PC-9 (cell line): ENCODE measurements at regions of chr14 and their contacts with region 1.

Region 1: GRCh38 chr14:92106143-92106926 is at the start of gene ATXN3:
- DNase-seq: peak; percentile 74 to 86
- H3K4me3 ChIP-seq: peak within 1 kb of the TSS; percentile 98
- H3K27ac ChIP-seq: peak within 1 kb of the TSS; percentile 83
- H3K4me1 ChIP-seq: peaks cover 4% of the 10 kb centered on the region
- H3K27me3 ChIP-seq: no peaks in the 10 kb centered on the region
- CTCF ChIP-seq: no peak; the same call in 1 of the 2 replicates
- total RNA-seq, gene ATXN3: 5.9 and 8.5 TPM in 2 replicates

Region 2: GRCh38 chr14:91060351-91061055 is 1045.8 kb before region 1 on chr14 and contains the start of gene RPS6KA5:
- CTCF ChIA-PET with region 1: no interaction called
- POLR2A ChIA-PET with region 1: interaction called, 15 read pairs
- intact Hi-C with region 1: no loop called
- DNase-seq: peak; percentile 88 to 96
- H3K4me3 ChIP-seq: peak within 1 kb of the TSS; percentile 82
- H3K27ac ChIP-seq: peak within 1 kb of the TSS; percentile 67
- H3K4me1 ChIP-seq: peaks cover 22% of the 10 kb centered on the region
- H3K27me3 ChIP-seq: no peaks in the 10 kb centered on the region
- CTCF ChIP-seq: 0 out of 2 replicates have a peak, but pooled peaks have one; percentile 15
- total RNA-seq, gene RPS6KA5: 3.0 and 3.5 TPM in 2 replicates

Region 3: DNA sequence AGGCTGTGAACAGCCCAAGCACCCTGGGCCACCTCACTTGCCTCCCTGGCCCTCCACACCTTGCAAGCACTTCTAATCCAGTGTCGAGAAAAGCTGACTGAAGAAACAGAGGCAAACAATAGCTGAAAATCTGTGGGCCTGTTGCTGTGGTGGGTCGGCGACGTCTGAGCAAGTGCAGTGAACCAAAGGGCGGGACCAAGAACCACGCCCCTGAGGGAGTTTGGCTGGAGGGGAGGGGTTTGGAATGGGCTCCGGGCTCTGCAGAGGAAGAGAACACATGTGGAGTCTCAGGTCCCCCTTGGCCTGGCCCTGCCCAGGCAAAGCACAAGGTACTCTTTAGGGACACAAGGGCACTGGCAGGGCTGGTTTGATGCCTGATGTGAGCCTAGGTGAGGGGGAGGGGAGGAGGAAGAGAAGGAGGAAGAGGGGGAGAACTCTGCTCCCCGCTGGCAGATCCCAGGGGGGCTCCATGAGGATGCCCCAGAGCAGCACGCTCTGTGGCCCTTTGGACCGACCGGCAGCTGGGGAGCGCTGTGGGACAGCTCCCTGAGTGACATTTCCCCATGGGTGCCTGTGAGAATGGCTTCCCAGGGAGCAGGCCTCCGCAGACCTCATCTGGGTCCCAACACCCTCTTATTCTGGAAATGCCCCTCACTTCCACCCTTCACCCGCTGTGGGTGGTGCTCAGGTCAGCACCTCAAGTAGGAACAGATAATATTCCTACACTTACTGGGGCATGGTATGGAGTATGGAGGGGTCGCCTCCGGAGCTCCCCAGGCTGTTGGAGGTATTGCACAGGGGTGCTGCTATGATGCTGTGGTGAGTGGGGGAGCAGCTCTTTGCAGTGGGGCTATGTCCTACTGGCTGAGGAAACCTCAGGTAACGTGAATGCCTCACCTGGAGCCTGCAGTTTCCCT is 100.9 kb after region 1 on chr14:
- CTCF ChIA-PET with region 1: no interaction called
- POLR2A ChIA-PET with region 1: no interaction called
- intact Hi-C with region 1: no loop called
- DNase-seq: no peak
- H3K4me3 ChIP-seq: no peak overlapping the region
- H3K27ac ChIP-seq: no peak overlapping the region
- H3K4me1 ChIP-seq: no peaks in the 10 kb centered on the region
- H3K27me3 ChIP-seq: peaks cover 10% of the 10 kb centered on the region; the same call in 1 of the 2 replicates
- CTCF ChIP-seq: no peak

Region 4: GRCh38 chr14:92737206-92737605 is 630.9 kb after region 1 on chr14:
- CTCF ChIA-PET with region 1: no interaction called
- POLR2A ChIA-PET with region 1: interaction called, 11 read pairs
- intact Hi-C with region 1: no loop called
- DNase-seq: no peak
- H3K4me3 ChIP-seq: no peak overlapping the region
- H3K27ac ChIP-seq: no peak overlapping the region
- H3K4me1 ChIP-seq: peaks cover 8% of the 10 kb centered on the region
- H3K27me3 ChIP-seq: no peaks in the 10 kb centered on the region
- CTCF ChIP-seq: no peak

Region 5: DNA sequence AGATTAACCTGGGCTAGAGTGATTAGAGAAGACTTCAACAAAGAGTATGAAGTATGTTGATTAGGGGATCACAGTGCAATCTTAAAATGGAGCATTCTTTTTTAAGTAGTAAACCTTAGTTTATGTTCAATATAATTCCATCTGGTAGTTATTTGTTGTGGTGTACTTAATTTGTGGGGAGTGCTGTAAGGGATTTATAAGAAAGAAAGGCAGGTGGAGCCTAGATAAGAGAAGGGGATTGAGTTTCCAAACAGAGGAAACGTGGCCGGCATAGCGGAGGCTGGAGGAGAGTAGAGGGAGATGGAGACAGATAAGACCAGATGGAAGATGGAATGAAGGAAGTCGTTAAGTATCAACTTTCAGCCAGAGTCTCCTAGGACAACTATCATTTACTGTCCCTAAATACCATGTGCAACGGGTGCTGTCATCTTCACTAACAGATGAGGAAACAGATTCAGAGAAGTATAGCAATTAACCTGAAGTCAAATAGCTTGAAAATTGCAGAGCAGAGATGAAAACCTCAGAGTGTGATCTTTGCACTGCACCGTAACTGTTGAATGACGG is 725.9 kb after region 1 on chr14:
- CTCF ChIA-PET with region 1: interaction called, 21 read pairs
- POLR2A ChIA-PET with region 1: no interaction called
- intact Hi-C with region 1: no loop called
- DNase-seq: no peak
- H3K4me3 ChIP-seq: no peak overlapping the region
- H3K27ac ChIP-seq: no peak overlapping the region
- H3K4me1 ChIP-seq: no peaks in the 10 kb centered on the region
- H3K27me3 ChIP-seq: no peaks in the 10 kb centered on the region
- CTCF ChIP-seq: no peak